ENCODE measurements at regions of chr12 and their contacts with region 1.

Region 1: DNA sequence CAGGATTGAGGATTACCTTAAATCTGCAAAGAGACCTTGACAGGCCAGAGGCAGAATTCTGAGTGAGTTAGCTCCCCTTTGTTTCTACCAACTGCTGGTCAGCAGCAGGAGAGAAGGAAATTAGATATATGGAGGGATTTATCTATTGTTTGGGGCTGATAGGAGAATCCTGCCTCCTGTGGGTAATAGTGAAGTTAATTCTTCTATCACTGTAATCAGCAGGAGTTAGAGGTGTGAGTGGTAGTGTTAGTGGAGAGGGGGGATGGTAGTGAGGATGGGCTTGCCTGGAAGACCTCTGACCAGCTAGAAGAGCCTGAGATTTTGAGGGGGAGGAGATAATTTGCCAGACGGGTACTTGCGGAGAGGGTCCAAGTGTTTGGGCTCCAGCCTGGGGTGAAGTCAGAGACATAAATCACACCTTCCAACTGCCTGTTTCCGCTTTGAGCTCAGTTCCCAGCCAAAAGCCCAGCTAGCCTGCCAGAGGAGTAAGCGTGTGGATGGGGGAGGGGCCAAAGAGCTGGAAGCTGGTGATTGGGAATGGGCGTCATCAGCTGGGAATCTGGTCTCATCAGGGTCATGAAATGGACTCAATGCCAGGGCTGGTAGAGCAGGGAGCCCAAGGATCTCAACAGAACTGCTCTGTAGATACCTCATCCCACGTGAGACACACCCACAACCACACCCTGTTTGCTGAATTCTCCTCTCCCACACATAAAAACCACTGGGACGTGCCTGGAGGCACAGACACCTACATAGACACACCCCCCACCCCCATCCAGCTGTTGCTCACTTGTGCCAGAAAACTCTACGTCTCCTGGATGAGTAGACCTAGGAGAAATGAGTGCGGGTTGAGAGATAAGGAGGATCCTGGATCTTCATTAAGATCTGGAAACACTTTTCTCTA is 13.1 kb upstream of the ITGA5 start:
- DNase-seq: peak; percentile 93

Region 2: DNA sequence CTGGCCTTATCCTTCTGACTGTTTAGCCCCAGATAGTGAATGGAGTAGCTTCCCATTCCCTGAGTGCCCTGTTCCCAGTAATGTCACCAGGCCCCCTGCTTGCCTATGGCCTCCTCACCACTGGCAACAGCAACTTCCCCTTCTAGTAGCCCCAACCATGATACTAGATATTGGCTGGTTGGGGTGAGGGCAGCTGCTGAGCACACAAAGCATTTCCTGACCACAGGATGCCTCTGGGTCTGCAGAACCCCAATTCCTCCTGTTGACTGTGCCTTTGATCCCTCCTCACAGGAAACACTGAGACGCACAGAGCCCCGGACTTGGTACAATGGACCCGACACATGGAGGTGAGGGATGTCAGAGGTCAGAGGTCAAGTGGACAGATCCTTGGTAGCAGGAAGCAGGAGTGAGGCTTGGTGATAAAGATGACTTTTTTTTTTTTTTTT is 1328.3 kb before region 1 on chr12:
- intact Hi-C with region 1: no loop called
- DNase-seq: no peak

Region 3: DNA sequence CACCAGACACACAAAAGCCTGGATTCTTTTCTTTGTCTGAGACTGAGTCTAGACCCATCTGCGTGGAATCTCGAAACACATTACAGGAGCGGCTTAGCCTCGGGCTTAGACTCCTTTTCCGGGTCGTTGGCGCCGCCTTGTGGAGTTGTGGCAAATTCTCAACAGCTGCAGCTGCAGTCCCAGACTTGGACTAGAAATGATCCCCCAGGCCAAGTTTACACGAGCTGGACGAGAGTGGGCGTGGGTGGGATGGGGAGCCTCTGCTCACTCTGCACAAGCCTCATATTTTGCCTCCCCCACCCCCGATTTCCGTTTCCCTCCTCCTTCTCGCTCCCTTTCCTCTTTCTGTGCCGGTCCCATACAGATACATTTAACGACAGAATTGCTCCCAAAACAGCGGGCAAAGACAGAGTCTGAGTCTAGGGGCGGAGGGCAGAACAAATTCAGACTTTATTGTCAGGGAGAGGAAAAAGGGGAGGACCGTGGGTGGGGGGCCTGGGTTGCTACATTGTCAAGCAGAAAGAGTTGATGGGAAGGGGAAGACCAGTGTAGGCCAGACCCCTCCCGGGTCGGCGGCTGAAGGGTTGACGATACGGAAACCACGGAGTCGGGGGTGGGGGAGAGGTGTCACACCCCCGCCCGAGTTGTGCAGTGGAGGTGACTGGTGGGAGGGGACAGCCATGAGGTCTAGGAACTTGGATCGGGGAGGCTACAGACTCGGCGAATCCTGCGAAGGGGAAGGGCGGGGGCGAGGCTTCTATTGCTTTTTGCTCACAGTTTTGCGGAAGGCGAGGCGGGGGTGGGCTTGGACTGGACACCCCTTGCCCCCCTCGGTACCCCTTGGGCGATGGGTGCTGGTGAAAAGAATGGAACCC is 63.2 kb before region 1 on chr12:
- intact Hi-C with region 1: no loop called
- DNase-seq: peak; percentile 98

Region 4: DNA sequence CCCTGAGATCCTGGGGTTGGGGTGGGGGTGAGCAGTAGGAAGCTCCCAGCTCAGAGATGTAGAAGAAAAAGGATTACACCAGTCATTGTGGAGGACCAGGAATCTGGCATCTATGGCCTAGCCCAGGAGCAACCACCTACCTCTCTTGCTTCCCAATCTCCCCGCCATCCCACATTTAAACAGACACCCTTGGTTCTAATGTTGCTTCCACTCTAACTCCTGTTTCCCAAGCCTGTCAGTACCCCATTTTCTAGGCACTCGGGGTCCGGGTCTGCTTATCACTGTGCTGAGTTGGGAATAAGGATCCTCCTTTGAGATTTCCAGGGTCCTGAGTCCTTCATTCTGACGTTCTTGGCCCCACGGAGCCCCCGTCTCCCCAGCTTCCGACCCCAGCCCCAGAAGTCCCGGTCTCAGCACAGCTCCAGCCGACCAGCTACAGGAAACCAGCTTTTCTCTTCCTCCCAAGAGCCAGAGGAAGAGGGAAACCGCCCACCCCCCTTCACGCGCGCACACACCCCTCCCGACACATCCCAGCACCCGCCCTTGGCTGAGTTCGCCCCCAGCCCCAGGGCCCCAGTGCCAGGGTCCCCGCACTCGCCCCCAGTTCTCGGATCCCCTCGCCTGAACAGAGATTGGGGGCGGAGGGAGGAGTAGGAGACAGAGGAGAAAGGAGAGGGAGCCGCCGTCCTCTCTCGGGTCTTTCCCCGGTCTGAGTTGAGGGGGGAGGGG is 14.3 kb before region 1 on chr12:
- intact Hi-C with region 1: loop called in 1 of 2 experiments (anchors 2 kb)
- DNase-seq: peak; percentile 71

Measured in posterior vena cava (tissue), 2 donors.